H1 (cell line): ENCODE measurements at regions of chr1 and their contacts with region 1.

Region 1: GRCh38 chr1:236759252-236759859 is 35.7 kb upstream of the MTR start:
- DNase-seq: no peak
- H3K4me3 ChIP-seq: no peak overlapping the region
- H3K27ac ChIP-seq: no peak overlapping the region
- H3K4me1 ChIP-seq: no peaks in the 10 kb centered on the region
- H3K27me3 ChIP-seq: peaks cover 0 to 1% (median 0%) of the 10 kb centered on the region in 4 experiments; a peak in 1 of 7 replicates
- CTCF ChIP-seq: peak in 2 of 3 experiments; percentile 40 to 70; a peak in 2 of 4 replicates
- EP300 ChIP-seq: no peak
- POLR2A ChIP-seq: no peak
- RAD21 ChIP-seq: peak; percentile 51 to 54

Region 2: DNA sequence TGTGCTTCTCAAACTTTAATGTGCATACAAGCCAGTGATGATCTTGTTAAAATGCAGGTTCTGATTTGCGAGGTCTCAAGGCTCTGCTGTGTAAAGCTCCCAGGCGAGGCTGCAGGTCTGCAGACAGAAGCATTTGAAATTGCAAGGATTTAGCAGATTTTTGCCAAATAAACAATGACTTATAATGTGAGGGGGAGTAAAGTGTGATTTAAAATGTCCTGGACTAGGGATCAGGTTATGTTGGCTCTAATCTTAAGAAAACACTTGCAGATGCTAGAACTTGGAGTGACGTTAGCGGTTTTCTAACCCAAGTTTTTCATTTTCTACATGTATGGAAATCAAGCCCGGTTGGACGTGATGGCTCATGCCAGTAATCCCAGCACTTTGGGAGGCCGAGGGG is 89.3 kb before region 1 on chr1:
- CTCF ChIA-PET with region 1: no interaction called
- POLR2A ChIA-PET with region 1: no interaction called
- DNase-seq: no peak
- H3K4me3 ChIP-seq: no peak overlapping the region
- H3K27ac ChIP-seq: no peak overlapping the region
- H3K4me1 ChIP-seq: no peaks in the 10 kb centered on the region
- H3K27me3 ChIP-seq: no peaks in the 10 kb centered on the region
- CTCF ChIP-seq: no peak
- EP300 ChIP-seq: no peak
- POLR2A ChIP-seq: no peak
- RAD21 ChIP-seq: no peak

Region 3: GRCh38 chr1:236702791-236703394 is 56.5 kb before region 1 on chr1:
- CTCF ChIA-PET with region 1: interaction called, 13 read pairs
- POLR2A ChIA-PET with region 1: no interaction called
- DNase-seq: no peak
- H3K4me3 ChIP-seq: no peak overlapping the region
- H3K27ac ChIP-seq: no peak overlapping the region
- H3K4me1 ChIP-seq: peaks cover 0 to 3% (median 0%) of the 10 kb centered on the region in 4 experiments; a peak in 1 of 7 replicates
- H3K27me3 ChIP-seq: no peaks in the 10 kb centered on the region
- CTCF ChIP-seq: no peak
- EP300 ChIP-seq: no peak
- POLR2A ChIP-seq: no peak
- RAD21 ChIP-seq: no peak

Region 4: DNA sequence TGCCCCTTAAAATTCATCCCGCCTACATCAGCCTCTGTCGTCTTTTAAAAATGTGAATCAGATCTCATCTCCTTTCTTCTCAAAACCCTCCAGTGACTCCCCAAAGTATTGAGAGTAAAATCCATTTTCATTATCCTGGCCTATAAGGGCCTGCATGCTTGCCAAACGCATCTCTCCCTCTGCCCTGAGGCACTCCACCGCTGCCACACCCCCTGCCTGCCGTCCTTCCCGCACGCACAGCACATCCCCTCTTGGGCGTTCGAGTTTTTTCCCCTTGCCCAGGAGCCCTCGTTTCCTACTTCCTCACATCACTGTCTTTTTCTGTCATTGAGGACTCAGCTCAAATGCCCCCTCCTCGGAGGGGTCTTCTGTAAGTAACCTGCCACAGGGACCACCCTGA is 17.6 kb before region 1 on chr1:
- CTCF ChIA-PET with region 1: interaction called, 11 read pairs
- POLR2A ChIA-PET with region 1: no interaction called
- DNase-seq: no peak
- H3K4me3 ChIP-seq: no peak overlapping the region
- H3K27ac ChIP-seq: no peak overlapping the region
- H3K4me1 ChIP-seq: no peaks in the 10 kb centered on the region; a peak in 1 of 7 replicates
- H3K27me3 ChIP-seq: no peaks in the 10 kb centered on the region
- CTCF ChIP-seq: no peak
- EP300 ChIP-seq: no peak
- POLR2A ChIP-seq: no peak
- RAD21 ChIP-seq: no peak

Region 5: GRCh38 chr1:236774926-236775325 is 15.6 kb after region 1 on chr1:
- CTCF ChIA-PET with region 1: interaction called, 26 read pairs
- POLR2A ChIA-PET with region 1: no interaction called
- DNase-seq: no peak
- H3K4me3 ChIP-seq: no peak overlapping the region
- H3K27ac ChIP-seq: no peak overlapping the region
- H3K4me1 ChIP-seq: no peaks in the 10 kb centered on the region
- H3K27me3 ChIP-seq: no peaks in the 10 kb centered on the region
- CTCF ChIP-seq: peak in 2 of 3 experiments; percentile 49 to 69; a peak in 2 of 4 replicates
- EP300 ChIP-seq: no peak
- POLR2A ChIP-seq: no peak
- RAD21 ChIP-seq: peak; percentile 60 to 65

Region 6: GRCh38 chr1:236795035-236795756 is 35.8 kb after region 1 on chr1 and contains the start of gene MTR:
- CTCF ChIA-PET with region 1: interaction called, 14 read pairs
- POLR2A ChIA-PET with region 1: no interaction called
- DNase-seq: peak; percentile 88 to 95
- H3K4me3 ChIP-seq: peak within 1 kb of the TSS; percentile 81 to 92 (median 85)
- H3K27ac ChIP-seq: no peak within 1 kb of the TSS
- H3K4me1 ChIP-seq: no peaks in the 10 kb centered on the region; a peak in 1 of 7 replicates
- H3K27me3 ChIP-seq: 0 out of 7 replicates have a peak, but pooled peaks cover 0 to 2% (median 0%) of the 10 kb centered on the region in 4 experiments
- CTCF ChIP-seq: no peak
- EP300 ChIP-seq: no peak
- POLR2A ChIP-seq: peak in 1 of 2 experiments; percentile 91; a peak in 2 of 3 replicates
- RAD21 ChIP-seq: no peak
- total RNA-seq, gene MTR: 24.2 and 27.4 TPM in 2 replicates